ENCODE measurements at regions of chr17 and their contacts with region 1.

Region 1: DNA sequence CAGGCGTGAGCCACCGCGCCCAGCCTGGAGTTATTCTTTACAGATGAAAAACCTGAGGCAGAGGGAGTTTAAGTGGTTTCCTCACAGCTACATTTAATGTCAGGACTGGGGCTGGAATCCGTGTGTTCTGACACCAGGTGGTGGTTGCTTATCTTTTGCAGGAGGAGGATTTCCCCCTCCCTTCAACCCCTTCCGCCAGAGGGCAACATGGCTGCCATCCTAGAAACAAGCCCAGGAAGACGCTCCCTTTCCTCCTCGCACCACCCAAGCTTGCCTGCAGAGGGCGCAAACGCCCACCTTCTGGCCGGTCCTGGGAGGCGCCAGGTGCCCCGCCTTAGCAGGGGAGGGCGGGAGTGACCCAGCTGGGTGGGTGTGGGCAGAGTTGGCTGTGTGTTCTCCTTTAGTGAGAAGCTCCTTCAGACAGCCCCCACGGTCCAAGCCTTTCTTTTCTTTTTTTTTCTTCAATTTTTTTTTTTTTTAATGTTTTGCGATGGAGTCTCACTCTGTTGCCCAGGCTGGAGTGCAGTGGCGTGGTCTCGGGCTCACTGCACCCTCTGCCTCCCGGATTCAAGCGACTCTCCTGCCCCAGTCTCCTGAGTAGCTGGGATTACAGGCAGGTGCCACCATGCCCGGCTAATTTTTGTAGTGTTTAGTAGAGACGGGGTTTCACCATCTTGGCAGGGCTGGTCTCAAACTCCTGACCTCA is 9.9 kb upstream of the RAP1GAP2 start:
- DNase-seq: peak; percentile 92 to 100
- H3K4me3 ChIP-seq: no peak overlapping the region
- H3K27ac ChIP-seq: no peak overlapping the region
- H3K4me1 ChIP-seq: no peaks in the 10 kb centered on the region; a peak in 1 of 7 replicates
- H3K27me3 ChIP-seq: no peaks in the 10 kb centered on the region
- CTCF ChIP-seq: peak; percentile 93 to 99 (median 98)
- EP300 ChIP-seq: no peak; a peak in 1 of 3 replicates
- POLR2A ChIP-seq: no peak
- RAD21 ChIP-seq: peak; percentile 78 to 87

Region 2: DNA sequence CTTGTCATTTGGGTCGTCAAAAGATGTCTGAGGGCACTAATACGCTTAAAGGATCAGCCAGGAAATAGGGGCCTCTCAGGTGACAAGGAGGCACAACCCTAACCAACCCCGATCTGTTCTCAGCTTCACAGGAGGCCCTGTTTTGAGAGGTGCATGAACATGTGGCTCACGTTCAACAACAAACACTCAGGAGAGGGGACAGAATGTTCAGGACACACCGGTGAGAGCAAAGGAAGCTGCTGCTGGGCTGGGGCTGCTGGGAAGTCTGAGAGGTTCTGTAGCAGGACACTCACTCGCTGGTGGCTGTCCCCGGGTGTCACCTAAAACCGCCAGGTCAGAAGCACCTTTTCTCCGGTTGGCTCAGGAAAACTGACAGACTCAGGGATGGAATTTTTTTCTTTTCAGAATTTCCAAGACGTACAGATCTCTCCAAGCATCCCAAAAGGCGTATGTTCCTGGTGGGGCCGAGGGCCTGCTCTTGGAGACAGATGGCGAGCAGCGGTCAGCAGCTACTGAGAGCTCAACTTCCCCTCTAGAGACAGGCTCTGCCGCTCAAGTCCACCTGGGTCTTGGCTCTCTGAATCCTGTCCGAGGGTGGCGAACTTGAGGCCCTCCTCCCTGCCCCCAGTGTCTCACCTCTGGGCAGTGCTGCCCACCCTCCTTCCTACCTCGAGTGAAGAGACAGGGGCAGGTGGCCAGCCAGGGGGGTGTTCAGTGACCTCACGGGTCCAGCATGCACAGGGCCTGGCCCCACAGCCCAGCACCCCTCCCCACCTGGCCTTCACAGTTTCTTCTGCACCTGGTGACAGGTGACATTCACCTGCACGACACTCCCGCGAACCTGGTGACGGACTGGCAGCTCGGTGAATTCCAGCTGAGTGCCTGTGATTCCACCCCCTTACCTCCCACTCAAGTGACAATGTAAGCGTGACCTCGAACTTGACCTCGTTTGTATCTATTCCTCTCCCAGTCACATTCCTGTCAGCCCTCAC is 97.7 kb before region 1 on chr17:
- CTCF ChIA-PET with region 1: no interaction called
- POLR2A ChIA-PET with region 1: no interaction called
- DNase-seq: peak in 1 of 2 experiments; percentile 51
- H3K4me3 ChIP-seq: no peak overlapping the region
- H3K27ac ChIP-seq: no peak overlapping the region
- H3K4me1 ChIP-seq: peaks cover 0 to 7% (median 0%) of the 10 kb centered on the region in 4 experiments; a peak in 2 of 7 replicates
- H3K27me3 ChIP-seq: no peaks in the 10 kb centered on the region
- CTCF ChIP-seq: no peak
- EP300 ChIP-seq: no peak
- POLR2A ChIP-seq: no peak
- RAD21 ChIP-seq: no peak

Region 3: DNA sequence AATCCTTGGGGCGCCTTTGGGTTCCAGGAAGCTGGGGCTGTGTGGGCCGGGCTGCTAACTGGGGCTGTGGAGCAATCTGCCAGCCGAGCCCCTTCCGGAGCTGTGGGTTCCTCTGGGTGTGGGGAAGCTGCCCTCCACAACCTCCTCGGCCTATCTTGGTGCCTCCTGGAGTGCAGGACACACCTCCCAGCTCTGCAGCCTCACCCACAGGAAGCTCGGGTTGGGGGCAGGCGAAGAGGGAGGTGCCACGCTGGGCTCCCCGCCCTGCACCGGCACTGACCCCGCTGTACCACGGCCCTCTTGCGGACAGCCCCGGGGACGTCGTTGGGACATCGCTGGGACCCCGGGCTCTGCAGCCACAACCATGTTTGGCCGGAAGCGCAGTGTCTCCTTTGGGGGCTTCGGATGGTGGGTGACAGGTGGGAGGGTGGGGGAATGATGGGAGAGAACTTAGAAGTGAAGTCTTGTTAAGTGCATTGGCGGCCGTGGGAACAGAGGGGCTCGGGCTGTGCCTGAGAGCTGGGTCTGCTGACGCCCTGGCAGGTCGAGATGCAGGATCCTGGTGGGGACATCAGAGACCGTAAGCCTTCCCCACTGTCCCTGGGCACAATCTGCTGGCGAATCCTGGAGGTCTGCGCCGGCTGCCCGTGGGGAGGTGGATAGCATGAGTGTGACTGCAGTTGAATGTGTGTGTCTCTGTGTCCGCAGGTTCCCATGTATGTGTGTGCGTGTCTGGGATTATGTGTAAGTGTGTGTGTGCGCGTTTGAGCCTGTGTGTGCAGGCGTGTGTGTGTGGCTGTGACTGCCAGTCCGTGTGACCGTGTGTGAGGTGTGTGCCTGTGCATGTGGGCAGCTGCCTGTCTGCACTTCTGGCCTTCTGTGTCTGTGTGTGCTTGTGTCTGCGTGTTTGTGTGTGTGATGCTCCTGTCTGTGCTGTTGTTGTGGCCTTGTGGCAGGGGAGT is 10.1 kb after region 1 on chr17 and contains the start of gene RAP1GAP2:
- CTCF ChIA-PET with region 1: interaction called, 12 read pairs
- POLR2A ChIA-PET with region 1: interaction called, 4 read pairs
- DNase-seq: no peak
- H3K4me3 ChIP-seq: no peak within 1 kb of the TSS
- H3K27ac ChIP-seq: no peak within 1 kb of the TSS
- H3K4me1 ChIP-seq: peaks cover 0 to 8% (median 4%) of the 10 kb centered on the region in 4 experiments; a peak in 4 of 7 replicates
- H3K27me3 ChIP-seq: no peaks in the 10 kb centered on the region
- CTCF ChIP-seq: no peak
- EP300 ChIP-seq: no peak
- POLR2A ChIP-seq: no peak
- RAD21 ChIP-seq: no peak
- total RNA-seq, gene RAP1GAP2: 63.4 and 63.8 TPM in 2 replicates

Region 4: DNA sequence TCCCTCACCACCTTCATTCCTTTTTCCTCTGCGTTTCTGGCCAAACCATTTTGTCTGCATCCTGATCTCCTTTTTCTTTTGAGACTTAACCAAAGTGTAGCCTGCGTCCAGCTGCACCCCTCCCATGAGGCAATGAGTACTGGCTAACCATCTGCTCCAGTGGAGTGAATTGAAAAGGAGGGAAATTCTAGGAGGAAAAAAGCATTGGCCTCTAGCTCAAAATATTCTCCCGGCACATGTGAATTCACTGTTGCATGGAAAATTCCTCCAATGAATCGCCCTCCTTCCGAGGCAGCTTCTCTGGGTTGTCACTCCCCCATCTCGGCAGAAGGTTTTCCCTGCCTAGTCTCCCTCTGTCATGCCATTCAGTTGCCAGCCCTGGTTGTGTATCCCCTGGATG is 15.5 kb after region 1 on chr17:
- CTCF ChIA-PET with region 1: interaction called, 12 read pairs
- POLR2A ChIA-PET with region 1: interaction called, 4 read pairs
- DNase-seq: no peak
- H3K4me3 ChIP-seq: no peak overlapping the region
- H3K27ac ChIP-seq: no peak overlapping the region
- H3K4me1 ChIP-seq: peaks cover 0 to 8% (median 4%) of the 10 kb centered on the region in 4 experiments; a peak in 4 of 7 replicates
- H3K27me3 ChIP-seq: no peaks in the 10 kb centered on the region
- CTCF ChIP-seq: no peak
- EP300 ChIP-seq: no peak
- POLR2A ChIP-seq: no peak
- RAD21 ChIP-seq: no peak

Region 5: DNA sequence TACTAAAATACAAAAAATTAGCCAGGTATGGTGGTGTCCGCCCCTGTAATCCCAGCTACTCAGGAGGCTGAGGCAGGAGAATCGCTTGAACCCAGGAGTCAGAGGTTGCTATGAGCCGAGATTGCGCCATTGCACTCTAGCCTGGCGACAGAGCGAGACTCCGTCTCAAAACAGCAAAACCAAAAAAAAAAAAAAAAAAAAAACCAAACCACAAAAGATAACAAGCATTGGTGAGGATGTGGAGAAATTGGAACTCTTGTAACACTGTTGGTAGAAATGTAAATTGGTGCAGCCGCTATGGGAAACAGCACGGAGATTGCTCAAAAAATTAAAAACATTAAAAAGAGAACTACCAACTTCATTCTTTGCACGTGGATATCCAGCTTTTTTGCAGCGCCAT is 157.7 kb after region 1 on chr17:
- CTCF ChIA-PET with region 1: no interaction called
- POLR2A ChIA-PET with region 1: no interaction called
- DNase-seq: no peak
- H3K4me3 ChIP-seq: no peak overlapping the region
- H3K27ac ChIP-seq: no peak overlapping the region
- H3K4me1 ChIP-seq: peaks cover 0 to 9% (median 4%) of the 10 kb centered on the region in 4 experiments; a peak in 3 of 7 replicates
- H3K27me3 ChIP-seq: no peaks in the 10 kb centered on the region
- CTCF ChIP-seq: no peak
- EP300 ChIP-seq: no peak
- POLR2A ChIP-seq: no peak
- RAD21 ChIP-seq: no peak

Measured in H1 (cell line).